Mammary epithelial cell (primary cell): ENCODE measurements at regions of chr10 and their contacts with region 1.

Region 1: GRCh38 chr10:128211953-128212727 is 85.9 kb upstream of the MKI67 start:
- DNase-seq: peak; percentile 60
- H3K4me3 ChIP-seq: no peak overlapping the region
- H3K27ac ChIP-seq: no peak overlapping the region
- H3K4me1 ChIP-seq: no peaks in the 10 kb centered on the region
- H3K27me3 ChIP-seq: no peaks in the 10 kb centered on the region
- CTCF ChIP-seq: peak; percentile 70 to 95

Region 2: GRCh38 chr10:128156999-128157755 is 55.0 kb before region 1 on chr10:
- CTCF ChIA-PET with region 1: no interaction called
- dilution Hi-C with region 1: loop called (anchors 5 kb)
- in situ Hi-C with region 1: no loop called
- intact Hi-C with region 1: no loop called
- DNase-seq: no peak
- H3K4me3 ChIP-seq: no peak overlapping the region
- H3K27ac ChIP-seq: no peak overlapping the region
- H3K4me1 ChIP-seq: no peaks in the 10 kb centered on the region
- H3K27me3 ChIP-seq: no peaks in the 10 kb centered on the region
- CTCF ChIP-seq: no peak